Endothelial cell of umbilical vein (primary cell): ENCODE measurements at regions of chr17 and their contacts with region 1.

Region 1: GRCh38 chr17:16380640-16381495 is at the start of gene UBB:
- DNase-seq: peak; percentile 98
- H3K4me3 ChIP-seq: peak within 1 kb of the TSS; percentile 65 to 90 (median 88)
- H3K27ac ChIP-seq: peak within 1 kb of the TSS; percentile 97
- H3K4me1 ChIP-seq: peaks cover 4% of the 10 kb centered on the region
- H3K27me3 ChIP-seq: no peaks in the 10 kb centered on the region
- CTCF ChIP-seq: peak in 1 of 2 donors; percentile 22
- POLR2A ChIP-seq: peak; percentile 100
- total RNA-seq, gene UBB: 1,183 and 1,294 TPM in 2 replicates

Region 2: DNA sequence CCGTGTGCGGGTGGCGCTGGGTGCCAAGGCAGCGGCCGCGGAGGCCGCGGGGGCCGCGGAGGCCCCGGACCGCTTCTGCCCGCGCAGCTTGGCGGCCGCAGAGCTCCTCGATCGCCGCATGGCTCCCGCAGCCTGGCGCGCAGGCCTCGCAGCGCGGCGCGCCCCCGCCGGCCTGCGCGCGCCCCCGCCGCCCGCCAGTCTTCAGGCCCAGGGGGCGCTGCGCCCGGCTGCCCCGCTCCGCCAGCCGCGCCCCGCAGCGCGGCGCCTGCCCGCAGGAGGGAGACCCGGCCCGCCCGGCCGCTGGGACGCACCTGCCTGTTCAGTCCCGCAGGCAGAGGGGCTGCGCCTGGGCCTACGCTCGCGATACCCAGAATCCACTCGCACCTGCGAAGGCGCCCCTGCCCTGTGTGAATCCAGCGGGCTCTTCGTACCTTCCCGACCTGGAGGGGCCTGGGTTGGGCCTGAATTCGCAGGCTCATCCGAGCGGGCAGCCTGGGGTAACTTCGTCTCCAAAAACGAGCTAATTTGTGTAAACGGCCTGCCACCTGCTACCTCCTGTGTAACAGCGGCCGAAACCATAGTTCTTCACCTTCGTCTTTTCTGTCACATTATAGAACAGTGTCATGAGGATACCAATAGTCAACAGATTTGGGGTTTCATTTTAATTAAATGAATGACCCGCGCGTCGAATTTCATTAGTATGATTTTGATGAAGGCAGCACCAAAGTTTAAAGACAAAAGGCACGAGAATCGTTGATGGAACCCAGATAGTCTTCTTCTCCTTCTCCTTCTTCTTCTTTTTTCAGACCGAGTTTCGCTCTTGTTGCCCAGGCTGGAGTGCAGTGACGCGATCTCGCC is 27.3 kb before region 1 on chr17 and contains the start of gene CENPV:
- CTCF ChIA-PET with region 1: interaction called, 7 read pairs
- POLR2A ChIA-PET with region 1: interaction called, 15 read pairs
- dilution Hi-C with region 1: no loop called
- intact Hi-C with region 1: no loop called
- DNase-seq: peak; percentile 47
- H3K4me3 ChIP-seq: peak within 1 kb of the TSS; percentile 48 to 60 (median 49)
- H3K27ac ChIP-seq: peak within 1 kb of the TSS; percentile 2
- H3K4me1 ChIP-seq: peaks cover 10% of the 10 kb centered on the region
- H3K27me3 ChIP-seq: no peaks in the 10 kb centered on the region
- CTCF ChIP-seq: peak in 1 of 2 donors; percentile 9
- POLR2A ChIP-seq: no peak
- total RNA-seq, gene CENPV: 41.6 and 44.0 TPM in 2 replicates

Region 3: GRCh38 chr17:16407911-16408588 is 27.2 kb after region 1 on chr17:
- CTCF ChIA-PET with region 1: no interaction called
- POLR2A ChIA-PET with region 1: interaction called, 10 read pairs
- dilution Hi-C with region 1: no loop called
- intact Hi-C with region 1: no loop called
- DNase-seq: peak; percentile 56
- H3K4me3 ChIP-seq: no peak overlapping the region
- H3K27ac ChIP-seq: no peak overlapping the region
- H3K4me1 ChIP-seq: peaks cover 6% of the 10 kb centered on the region
- H3K27me3 ChIP-seq: no peaks in the 10 kb centered on the region
- CTCF ChIP-seq: no peak
- POLR2A ChIP-seq: no peak

Region 4: DNA sequence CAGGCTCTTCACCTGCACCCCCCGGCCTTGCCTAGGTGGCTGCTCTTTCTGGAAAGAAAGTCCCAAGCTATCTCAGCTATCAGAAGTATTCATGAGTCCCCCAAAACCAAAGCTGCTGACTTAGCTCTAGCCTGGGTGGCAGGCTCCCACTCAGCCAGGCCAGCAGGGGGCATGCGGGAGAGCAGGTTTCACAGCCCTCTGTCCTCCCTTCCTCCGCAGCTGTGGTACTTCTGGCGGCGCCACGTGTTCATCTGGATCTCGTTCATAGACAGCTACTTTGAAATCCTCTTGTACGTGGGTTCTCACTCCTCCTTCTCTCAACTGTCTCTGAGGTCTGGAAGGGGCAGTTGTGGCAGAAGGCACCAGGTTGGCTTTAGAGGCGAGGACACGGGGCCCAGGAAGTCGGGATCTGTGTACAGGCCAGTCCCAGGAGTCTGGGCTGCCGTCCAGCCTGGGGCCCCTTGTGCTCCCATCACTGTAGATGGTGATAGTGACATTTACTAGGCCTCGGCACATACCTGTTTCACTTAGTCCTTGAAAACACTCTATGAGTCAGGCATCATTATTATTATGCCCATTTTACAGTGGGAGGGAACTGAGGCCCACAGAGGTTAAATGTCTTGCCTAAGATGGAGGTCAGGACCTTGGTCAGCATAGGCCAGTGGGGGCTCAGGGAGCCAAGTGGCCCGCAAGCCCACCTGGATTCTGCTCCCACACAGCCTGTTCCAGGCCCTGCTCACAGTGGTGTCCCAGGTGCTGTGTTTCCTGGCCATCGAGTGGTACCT is 47.4 kb after region 1 on chr17:
- CTCF ChIA-PET with region 1: interaction called, 4 read pairs
- POLR2A ChIA-PET with region 1: interaction called, 10 read pairs
- dilution Hi-C with region 1: no loop called
- intact Hi-C with region 1: no loop called
- DNase-seq: peak; percentile 29
- H3K4me3 ChIP-seq: no peak overlapping the region
- H3K27ac ChIP-seq: no peak overlapping the region
- H3K4me1 ChIP-seq: no peaks in the 10 kb centered on the region
- H3K27me3 ChIP-seq: no peaks in the 10 kb centered on the region
- CTCF ChIP-seq: peak; percentile 61 to 81
- POLR2A ChIP-seq: no peak

Region 5: GRCh38 chr17:16444258-16444886 is 63.5 kb after region 1 on chr17:
- CTCF ChIA-PET with region 1: interaction called, 3 read pairs
- POLR2A ChIA-PET with region 1: interaction called, 19 read pairs
- dilution Hi-C with region 1: no loop called
- intact Hi-C with region 1: loop called (anchors 1 kb)
- DNase-seq: no peak
- H3K4me3 ChIP-seq: no peak overlapping the region
- H3K27ac ChIP-seq: no peak overlapping the region
- H3K4me1 ChIP-seq: peaks cover 31% of the 10 kb centered on the region
- H3K27me3 ChIP-seq: no peaks in the 10 kb centered on the region
- CTCF ChIP-seq: no peak
- POLR2A ChIP-seq: peak; percentile 8